Cardiac septum (tissue), 1 donor: ENCODE measurements at regions of chr1 and their contacts with region 1.

Region 1: GRCh38 chr1:99580451-99580850 is 65.5 kb upstream of the PALMD start:
- DNase-seq: no peak

Region 2: DNA sequence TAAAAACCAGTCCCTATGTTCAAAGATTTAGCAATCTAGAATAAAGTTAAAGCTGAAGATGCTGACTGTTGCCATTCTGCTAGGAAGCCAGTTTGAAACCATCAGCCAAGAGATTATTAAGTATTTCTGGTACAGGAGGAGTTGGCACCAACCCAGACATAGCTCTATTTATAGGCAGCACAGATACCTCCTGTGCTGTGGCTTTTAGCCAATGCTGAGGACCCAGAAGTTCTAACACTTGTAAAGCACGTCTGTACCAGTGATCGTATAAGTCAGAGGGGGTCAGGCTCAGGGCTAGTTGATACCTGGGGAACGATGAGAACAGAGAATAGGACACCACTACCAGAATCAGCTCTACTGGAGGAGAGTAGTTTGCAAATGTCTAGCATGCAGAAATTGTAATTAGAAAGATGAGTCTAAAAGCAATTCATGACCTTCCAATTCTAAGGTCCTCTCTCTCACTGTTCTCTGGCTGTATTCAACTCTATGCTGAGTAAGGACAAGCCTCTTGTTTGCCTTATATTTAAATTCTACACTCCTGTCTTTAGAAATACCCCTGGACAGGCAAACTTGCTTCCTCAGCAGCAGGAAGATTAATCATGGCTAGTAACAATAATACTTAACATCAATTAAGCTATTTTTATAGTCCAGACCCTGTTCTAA is 31.4 kb before region 1 on chr1:
- intact Hi-C with region 1: loop called (anchors 2 kb)
- DNase-seq: no peak